ENCODE measurements at regions of chr12 and their contacts with region 1.

Region 1: GRCh38 chr12:53379389-53380103 is 430 bp upstream of the SP1 start:
- DNase-seq: peak; percentile 100
- ATAC-seq: peak; percentile 84
- H3K4me3 ChIP-seq: peak overlapping the region; percentile 62
- H3K27ac ChIP-seq: peak overlapping the region; percentile 89
- H3K4me1 ChIP-seq: peaks cover 25% of the 10 kb centered on the region
- H3K27me3 ChIP-seq: no peaks in the 10 kb centered on the region
- CTCF ChIP-seq: no peak
- EP300 ChIP-seq: no peak
- POLR2A ChIP-seq: peak; percentile 97
- RAD21 ChIP-seq: no peak

Region 2: DNA sequence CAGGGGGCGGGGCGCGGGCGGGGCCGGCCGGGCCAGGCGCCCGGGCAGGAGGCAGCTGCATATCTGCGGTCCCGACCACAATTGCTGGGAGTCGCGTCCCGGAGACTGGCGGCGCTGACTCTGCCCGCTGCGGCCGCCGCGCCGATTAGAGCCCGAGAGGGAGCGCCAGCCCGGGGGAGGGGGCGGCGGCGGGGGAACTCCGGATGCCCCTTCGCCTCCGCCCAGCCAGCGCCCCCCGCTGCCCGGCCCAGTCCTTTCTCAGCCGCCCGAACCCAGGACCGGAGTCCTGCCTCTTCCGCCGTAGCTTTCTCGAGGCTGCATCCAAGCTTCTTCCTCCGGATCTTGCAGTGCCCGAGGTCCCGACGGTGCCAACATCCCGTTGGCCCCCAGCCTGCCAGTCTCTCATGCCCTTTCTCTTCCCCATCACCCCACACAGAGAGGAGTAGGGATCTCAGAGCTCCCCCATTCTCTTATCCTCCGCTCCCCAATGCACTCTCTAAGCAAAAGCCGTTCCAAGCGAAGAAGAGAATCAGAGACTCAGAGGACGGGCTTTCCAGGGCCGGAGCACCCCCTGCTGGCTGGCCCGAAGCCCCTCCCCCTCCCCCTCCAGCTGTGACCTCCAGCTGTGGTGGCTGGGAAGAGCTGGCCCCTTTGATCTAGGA is 34.6 kb before region 1 on chr12:
- CTCF ChIA-PET with region 1: interaction called, 15 read pairs
- POLR2A ChIA-PET with region 1: interaction called, 10 read pairs
- RAD21 ChIA-PET with region 1: interaction called, 8 read pairs
- SMC1A ChIA-PET with region 1: interaction called, 10 read pairs
- in situ Hi-C with region 1: no loop called
- intact Hi-C with region 1: no loop called
- DNase-seq: no peak
- ATAC-seq: peak; percentile 95
- H3K4me3 ChIP-seq: peak overlapping the region; percentile 80
- H3K27ac ChIP-seq: no peak overlapping the region
- H3K4me1 ChIP-seq: peaks cover 5% of the 10 kb centered on the region
- H3K27me3 ChIP-seq: peaks cover 0 to 5% of the 10 kb centered on the region in 2 experiments; a peak in 1 of 4 replicates
- CTCF ChIP-seq: peak; percentile 68 to 90 (median 87)
- EP300 ChIP-seq: no peak
- POLR2A ChIP-seq: 0 out of 2 replicates have a peak, but pooled peaks have one; percentile 32
- RAD21 ChIP-seq: peak; percentile 81

Region 3: DNA sequence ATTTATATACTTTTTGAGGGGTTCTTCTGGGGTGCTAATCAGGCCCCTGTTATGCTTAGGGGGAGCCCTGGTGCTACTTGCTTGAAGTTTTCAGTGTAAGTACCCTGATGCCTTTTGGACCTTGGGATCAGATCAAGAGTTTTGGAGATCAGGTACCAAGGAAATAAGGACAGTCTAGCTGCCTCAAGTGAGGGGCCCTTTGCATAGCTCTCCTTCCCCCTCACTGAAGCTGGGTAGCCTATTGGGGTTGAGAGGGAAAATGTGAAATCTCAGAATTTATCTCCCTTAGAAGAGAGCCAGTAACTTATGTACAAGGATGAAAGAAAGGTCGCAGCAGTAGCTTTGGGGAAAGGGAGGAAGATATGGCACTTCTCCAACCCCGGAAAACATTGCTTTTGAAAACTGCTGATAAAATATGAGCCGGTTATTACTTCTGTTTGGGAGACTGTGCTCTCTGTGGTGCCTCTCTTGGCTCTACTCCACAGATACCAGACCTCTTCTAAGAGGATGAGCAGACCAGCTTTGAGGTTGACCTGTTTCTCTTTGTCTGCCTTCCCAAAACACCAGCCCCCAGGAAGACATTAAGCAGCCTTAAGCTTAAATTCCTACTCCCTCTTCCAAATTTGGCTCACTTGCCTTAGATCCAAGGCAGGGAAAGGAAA is 35.3 kb after region 1 on chr12:
- CTCF ChIA-PET with region 1: interaction called, 53 read pairs
- POLR2A ChIA-PET with region 1: interaction called, 24 read pairs
- RAD21 ChIA-PET with region 1: interaction called, 22 read pairs
- SMC1A ChIA-PET with region 1: interaction called, 41 read pairs
- in situ Hi-C with region 1: no loop called
- intact Hi-C with region 1: loop called (anchors 5 kb)
- DNase-seq: no peak
- ATAC-seq: no peak
- H3K4me3 ChIP-seq: no peak overlapping the region
- H3K27ac ChIP-seq: no peak overlapping the region
- H3K4me1 ChIP-seq: peaks cover 18% of the 10 kb centered on the region
- H3K27me3 ChIP-seq: no peaks in the 10 kb centered on the region
- CTCF ChIP-seq: no peak
- EP300 ChIP-seq: no peak
- POLR2A ChIP-seq: no peak
- RAD21 ChIP-seq: no peak

Region 4: GRCh38 chr12:53427905-53428594 is 48.5 kb after region 1 on chr12:
- CTCF ChIA-PET with region 1: interaction called, 9 read pairs
- POLR2A ChIA-PET with region 1: interaction called, 3 read pairs
- RAD21 ChIA-PET with region 1: interaction called, 7 read pairs
- SMC1A ChIA-PET with region 1: interaction called, 41 read pairs
- in situ Hi-C with region 1: no loop called
- intact Hi-C with region 1: loop called (anchors 5 kb)
- DNase-seq: no peak
- ATAC-seq: peak; percentile 56
- H3K4me3 ChIP-seq: no peak overlapping the region
- H3K27ac ChIP-seq: no peak overlapping the region
- H3K4me1 ChIP-seq: no peaks in the 10 kb centered on the region
- H3K27me3 ChIP-seq: no peaks in the 10 kb centered on the region
- CTCF ChIP-seq: no peak
- EP300 ChIP-seq: no peak
- POLR2A ChIP-seq: no peak
- RAD21 ChIP-seq: no peak

Region 5: DNA sequence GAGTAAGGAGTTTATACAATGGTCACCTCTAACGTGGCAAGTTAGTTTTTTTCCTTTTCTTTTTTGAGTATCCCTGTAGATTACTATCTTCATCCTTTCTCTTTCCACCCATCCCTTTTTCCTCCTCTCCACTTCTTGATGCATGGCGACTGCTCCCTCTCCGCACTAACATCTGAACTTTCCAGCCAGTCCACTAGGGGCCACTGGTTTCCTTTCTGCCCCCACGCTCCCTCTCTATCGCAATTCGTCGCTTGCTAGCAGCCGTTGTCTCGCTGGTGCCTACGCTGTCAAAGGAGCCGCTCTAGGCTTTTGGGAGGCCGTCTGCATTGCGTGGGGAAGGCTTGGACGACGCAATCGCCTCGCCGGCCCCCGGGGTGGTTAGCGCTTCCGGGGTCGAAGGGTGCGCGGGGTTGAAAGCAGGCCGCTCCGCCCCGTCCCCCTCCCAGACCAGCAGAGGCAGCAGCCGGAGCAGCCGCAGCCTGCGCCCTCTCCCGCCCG is 72.2 kb after region 1 on chr12 and contains the start of gene PCBP2:
- CTCF ChIA-PET with region 1: interaction called, 3 read pairs
- POLR2A ChIA-PET with region 1: interaction called, 10 read pairs
- RAD21 ChIA-PET with region 1: interaction called, 3 read pairs
- SMC1A ChIA-PET with region 1: no interaction called
- in situ Hi-C with region 1: no loop called
- intact Hi-C with region 1: loop called (anchors 2 kb)
- DNase-seq: peak; percentile 96
- ATAC-seq: peak; percentile 97
- H3K4me3 ChIP-seq: peak within 1 kb of the TSS; percentile 97
- H3K27ac ChIP-seq: peak within 1 kb of the TSS; percentile 92
- H3K4me1 ChIP-seq: peaks cover 5% of the 10 kb centered on the region
- H3K27me3 ChIP-seq: no peaks in the 10 kb centered on the region
- CTCF ChIP-seq: peak; percentile 92 to 97 (median 95)
- EP300 ChIP-seq: peak in 1 of 2 experiments; percentile 21; a peak in 1 of 4 replicates
- POLR2A ChIP-seq: peak; percentile 91
- RAD21 ChIP-seq: no peak
- polyA plus RNA-seq, gene PCBP2: 318 to 348 TPM

Region 6: DNA sequence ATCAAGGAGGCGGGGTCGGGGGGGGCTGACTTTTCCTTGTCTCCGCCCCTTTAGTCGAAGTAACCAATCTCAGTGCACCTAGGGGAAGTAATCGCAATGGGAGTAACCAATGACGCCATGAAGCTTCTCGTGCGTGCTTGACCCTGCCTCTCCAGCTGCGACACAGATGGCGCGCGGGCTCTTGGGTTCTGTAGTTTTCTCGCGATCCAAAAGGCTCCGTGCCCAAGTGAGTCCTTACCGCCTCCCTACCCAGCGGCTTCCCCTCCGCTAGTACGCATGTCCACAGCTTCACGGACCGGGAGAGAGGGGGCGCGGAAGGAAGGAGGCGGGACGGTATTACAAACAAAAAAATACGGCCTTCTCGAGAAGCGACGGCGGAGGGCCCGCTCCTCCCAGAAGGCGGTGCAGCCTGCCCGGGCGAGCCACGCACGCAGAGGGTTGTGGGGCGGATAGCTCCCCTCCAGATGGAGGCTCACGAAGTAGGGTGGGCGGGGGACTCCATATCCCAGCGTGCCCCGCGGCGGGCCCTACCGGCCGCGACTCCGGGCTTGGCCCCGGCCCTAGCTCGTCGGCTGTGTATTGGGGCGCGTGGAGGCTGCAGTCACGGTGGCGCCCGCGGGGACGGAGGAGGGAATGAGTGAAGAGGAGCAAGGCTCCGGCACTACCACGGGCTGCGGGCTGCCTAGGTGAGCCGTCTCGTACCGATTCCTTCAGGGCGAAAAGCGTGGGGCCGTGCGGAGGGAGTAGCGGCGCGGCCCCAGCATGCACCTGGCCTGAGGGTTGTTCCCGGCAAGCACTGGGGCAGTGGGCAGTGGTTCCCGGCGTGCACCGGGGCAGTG is 121.4 kb after region 1 on chr12 and contains the start of gene TARBP2:
- CTCF ChIA-PET with region 1: no interaction called
- POLR2A ChIA-PET with region 1: interaction called, 18 read pairs
- RAD21 ChIA-PET with region 1: interaction called, 8 read pairs
- SMC1A ChIA-PET with region 1: interaction called, 6 read pairs
- in situ Hi-C with region 1: no loop called
- intact Hi-C with region 1: loop called (anchors 1 kb)
- DNase-seq: peak; percentile 98
- ATAC-seq: peak; percentile 84
- H3K4me3 ChIP-seq: peak within 1 kb of the TSS; percentile 76
- H3K27ac ChIP-seq: peak within 1 kb of the TSS; percentile 95
- H3K4me1 ChIP-seq: peaks cover 13% of the 10 kb centered on the region
- H3K27me3 ChIP-seq: no peaks in the 10 kb centered on the region
- CTCF ChIP-seq: no peak
- EP300 ChIP-seq: peak in 1 of 2 experiments; percentile 38; a peak in 1 of 4 replicates
- POLR2A ChIP-seq: peak; percentile 94
- RAD21 ChIP-seq: no peak
- polyA plus RNA-seq, gene TARBP2: 5.5 to 9.4 TPM